ENCODE measurements at regions of chr2 and their contacts with region 1.

Region 1: DNA sequence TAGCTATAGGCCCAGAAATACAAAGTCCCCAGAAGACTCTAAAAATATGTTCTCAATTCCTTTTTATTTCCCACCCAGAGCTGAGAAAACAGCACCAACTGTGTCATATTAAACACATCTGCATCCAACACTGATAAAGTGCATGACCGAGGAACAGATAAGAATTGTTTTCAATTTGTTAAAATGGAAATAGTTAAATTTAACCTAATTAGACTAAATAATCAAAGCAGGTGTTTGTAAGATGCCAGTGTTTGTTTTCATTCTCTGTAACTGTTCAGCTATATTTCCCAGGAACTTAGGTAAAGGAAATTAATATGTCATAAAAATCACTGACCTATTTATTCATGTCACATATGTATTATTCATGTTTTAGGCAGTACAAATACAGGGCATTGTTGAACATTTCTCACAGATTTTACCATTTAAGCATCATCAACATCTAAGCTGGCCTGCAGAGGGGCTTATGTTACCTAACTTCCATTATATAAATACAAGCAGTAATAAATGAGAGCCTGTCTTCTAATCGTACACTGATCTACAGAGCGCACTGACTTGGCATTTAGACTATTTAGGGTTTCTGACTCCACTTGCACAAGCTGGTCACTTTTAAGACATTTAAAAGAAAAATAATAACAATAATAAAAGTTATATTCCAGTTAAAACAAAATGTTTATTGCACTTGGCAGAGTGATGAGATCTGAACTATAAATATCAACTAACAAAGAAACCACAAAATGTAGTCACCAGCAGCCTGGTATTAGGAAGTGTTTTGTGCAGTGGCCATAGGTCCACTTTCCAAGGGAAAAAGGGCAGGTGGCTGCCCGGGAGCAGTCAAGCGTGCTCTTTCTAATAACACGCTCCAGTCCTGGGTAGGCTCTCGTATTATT is 86.6 kb upstream of the ZFP36L2 start:
- DNase-seq: peak; percentile 56
- H3K4me3 ChIP-seq: no peak overlapping the region
- H3K27ac ChIP-seq: peak overlapping the region; percentile 49
- H3K27me3 ChIP-seq: no peaks in the 10 kb centered on the region
- CTCF ChIP-seq: no peak

Region 2: GRCh38 chr2:43402452-43402944 is 89.5 kb after region 1 on chr2:
- CTCF ChIA-PET with region 1: no interaction called
- POLR2A ChIA-PET with region 1: interaction called, 11 read pairs
- DNase-seq: no peak
- H3K4me3 ChIP-seq: no peak overlapping the region
- H3K27ac ChIP-seq: no peak overlapping the region
- H3K27me3 ChIP-seq: no peaks in the 10 kb centered on the region
- CTCF ChIP-seq: no peak